ENCODE measurements at regions of chr9 and their contacts with region 1.

Region 1: GRCh38 chr9:135439916-135440315 is 39.7 kb upstream of the PPP1R26 start:
- DNase-seq: no peak
- ATAC-seq: no peak
- H3K4me3 Mint-ChIP-seq: no peak overlapping the region
- H3K27ac Mint-ChIP-seq: no peak overlapping the region
- H3K4me1 Mint-ChIP-seq: no peaks in the 10 kb centered on the region
- H3K27me3 Mint-ChIP-seq: peaks cover 10% of the 10 kb centered on the region

Region 2: DNA sequence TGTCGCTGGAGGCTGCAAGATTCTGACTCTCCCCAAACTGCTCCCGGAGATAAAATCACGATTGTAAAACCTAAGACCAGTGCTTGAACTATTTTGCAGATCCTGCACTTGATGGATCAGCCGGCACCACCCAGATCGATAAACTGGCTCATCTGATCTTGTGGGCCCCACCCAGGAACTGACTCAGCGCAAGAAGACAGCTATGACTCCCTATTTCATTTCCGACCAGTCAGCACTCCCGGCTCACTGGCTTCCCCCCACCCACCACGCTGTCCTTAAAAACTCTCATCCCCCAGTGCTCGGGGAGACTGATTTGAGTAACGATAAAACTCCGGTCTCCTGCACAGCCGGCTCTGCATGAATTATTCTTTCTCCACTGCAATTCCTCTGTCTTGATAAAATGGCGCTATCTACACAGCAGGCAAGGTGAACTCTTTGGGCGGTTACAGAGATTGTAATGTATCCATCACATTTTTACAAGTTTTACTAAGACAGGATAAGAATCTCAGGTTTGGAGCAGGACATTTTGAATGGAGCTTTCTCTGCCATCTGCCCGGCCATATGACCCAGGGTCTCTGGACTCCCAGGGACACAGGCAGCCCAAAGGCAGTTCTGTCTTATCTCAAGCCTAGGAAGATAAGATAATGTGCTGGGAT is 29.1 kb after region 1 on chr9:
- CTCF ChIA-PET with region 1: no interaction called
- POLR2A ChIA-PET with region 1: no interaction called
- intact Hi-C with region 1: loop called in 1 of 2 experiments (anchors 2 kb)
- DNase-seq: peak; percentile 79
- ATAC-seq: peak; percentile 98
- H3K4me3 Mint-ChIP-seq: peak overlapping the region; percentile 42
- H3K27ac Mint-ChIP-seq: no peak overlapping the region
- H3K4me1 Mint-ChIP-seq: peaks cover 19% of the 10 kb centered on the region
- H3K27me3 Mint-ChIP-seq: peaks cover 39% of the 10 kb centered on the region

Region 3: GRCh38 chr9:135655337-135655736 is 215.4 kb after region 1 on chr9:
- CTCF ChIA-PET with region 1: no interaction called
- POLR2A ChIA-PET with region 1: no interaction called
- intact Hi-C with region 1: no loop called
- DNase-seq: no peak
- ATAC-seq: no peak
- H3K4me3 Mint-ChIP-seq: no peak overlapping the region
- H3K27ac Mint-ChIP-seq: no peak overlapping the region
- H3K4me1 Mint-ChIP-seq: no peaks in the 10 kb centered on the region
- H3K27me3 Mint-ChIP-seq: peaks cover 8% of the 10 kb centered on the region

Measured in activated CD4-positive, alpha-beta T cell treated with anti-CD3 and anti-CD28 coated beads for 36 hours (primary cell).